ENCODE measurements at regions of chr12 and their contacts with region 1.

Region 1: DNA sequence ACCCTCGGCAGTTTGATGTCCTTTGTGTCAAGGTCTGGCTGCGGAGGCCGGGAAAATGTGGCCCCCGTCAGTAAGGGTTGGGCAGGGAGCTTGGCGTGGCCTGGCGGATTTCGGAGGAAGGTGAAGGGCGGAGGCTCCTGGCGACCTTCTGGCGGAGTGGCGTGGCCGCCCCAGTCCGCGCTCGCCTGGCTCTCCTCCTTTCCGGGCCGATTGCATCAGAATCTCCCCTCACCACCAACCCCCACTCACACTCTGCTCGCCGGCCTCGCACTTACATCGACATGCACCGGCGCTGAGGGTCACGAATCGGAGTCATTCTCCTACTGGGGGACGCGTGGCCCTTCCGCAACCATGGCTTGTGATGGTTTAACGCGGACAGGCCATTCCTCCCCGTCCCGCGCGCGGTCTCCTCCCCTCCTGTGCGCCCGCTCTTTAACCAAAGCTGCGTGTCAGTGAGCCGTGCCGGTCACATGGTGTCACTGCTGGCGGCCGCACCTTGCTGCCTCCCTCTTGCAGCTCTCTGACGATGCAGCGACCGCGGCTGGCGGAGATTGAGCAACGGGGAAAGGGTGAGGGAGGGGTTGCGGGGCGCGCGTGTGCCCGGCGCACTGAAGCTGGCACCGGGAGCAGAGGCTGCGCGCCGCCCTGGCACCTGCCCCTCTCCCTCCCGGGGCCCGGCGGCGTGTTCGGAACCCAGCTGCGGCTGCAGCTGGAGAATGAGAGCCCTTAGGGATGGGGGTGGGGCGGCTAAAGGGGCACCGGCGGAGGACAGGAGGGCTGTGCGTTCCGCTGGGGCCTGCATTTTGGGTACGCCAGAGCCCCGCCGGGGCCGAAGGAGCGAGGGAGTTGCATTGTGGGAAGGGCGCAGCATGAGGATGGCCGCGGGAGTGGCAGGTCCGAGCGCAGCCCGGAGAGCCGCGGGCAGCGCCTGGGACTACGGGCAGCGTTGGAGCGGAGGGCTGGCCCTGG is at the start of gene SLC38A1:
- DNase-seq: peak in 1 of 2 experiments; percentile 83
- H3K4me3 ChIP-seq: peak within 1 kb of the TSS; percentile 91 to 98 (median 96)
- H3K27ac ChIP-seq: peak within 1 kb of the TSS; percentile 97
- H3K4me1 ChIP-seq: peaks cover 3 to 18% (median 10%) of the 10 kb centered on the region in 4 experiments; a peak in 6 of 7 replicates
- H3K27me3 ChIP-seq: no peaks in the 10 kb centered on the region
- CTCF ChIP-seq: no peak
- EP300 ChIP-seq: no peak
- POLR2A ChIP-seq: peak; percentile 49 to 63; a peak in 2 of 3 replicates
- RAD21 ChIP-seq: peak in 1 of 2 experiments; percentile 18; a peak in 1 of 4 replicates
- total RNA-seq, gene SLC38A1: 242 and 253 TPM in 2 replicates

Region 2: DNA sequence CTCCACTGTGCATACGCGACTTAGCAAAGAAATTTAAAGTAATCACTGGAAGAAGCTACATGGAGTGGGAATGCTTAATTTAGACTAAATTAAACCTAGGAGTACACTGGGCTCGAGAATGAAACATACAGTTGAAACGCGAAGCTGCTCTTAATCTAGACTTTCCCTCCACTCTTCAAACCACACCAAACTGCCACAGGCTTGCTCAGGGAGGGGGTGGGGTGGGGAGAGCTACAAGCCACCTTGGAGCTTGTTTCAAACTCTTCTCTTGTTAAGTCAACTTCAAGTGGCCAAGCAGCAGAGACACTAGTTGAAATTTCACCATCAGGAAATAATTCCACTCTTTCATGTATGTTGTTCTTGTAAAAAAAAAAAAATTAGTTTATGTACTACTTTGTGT is 70.0 kb before region 1 on chr12:
- CTCF ChIA-PET with region 1: no interaction called
- POLR2A ChIA-PET with region 1: interaction called, 16 read pairs
- DNase-seq: no peak
- H3K4me3 ChIP-seq: no peak overlapping the region
- H3K27ac ChIP-seq: no peak overlapping the region
- H3K4me1 ChIP-seq: no peaks in the 10 kb centered on the region
- H3K27me3 ChIP-seq: no peaks in the 10 kb centered on the region
- CTCF ChIP-seq: no peak
- EP300 ChIP-seq: no peak
- POLR2A ChIP-seq: no peak
- RAD21 ChIP-seq: no peak

Region 3: DNA sequence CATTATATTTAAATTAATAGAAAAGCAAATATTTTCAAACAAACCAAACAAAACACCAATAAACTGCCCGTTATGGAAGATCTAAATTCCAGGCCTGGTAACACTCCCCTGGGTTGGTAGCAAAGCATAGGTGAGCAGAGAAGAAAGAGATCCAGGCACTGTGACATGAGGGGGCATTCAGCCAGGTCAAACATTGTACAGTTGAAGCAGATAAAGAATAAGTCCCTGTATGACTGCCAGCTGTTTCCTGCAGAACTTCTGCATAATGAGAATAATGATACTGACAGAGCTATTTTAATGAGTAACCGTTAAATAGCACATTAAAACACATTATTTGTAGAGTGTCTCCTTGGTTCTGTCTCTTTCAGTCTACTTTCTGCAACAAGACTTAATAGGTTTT is 35.5 kb before region 1 on chr12:
- CTCF ChIA-PET with region 1: interaction called, 3 read pairs
- POLR2A ChIA-PET with region 1: interaction called, 17 read pairs
- DNase-seq: no peak
- H3K4me3 ChIP-seq: no peak overlapping the region
- H3K27ac ChIP-seq: no peak overlapping the region
- H3K4me1 ChIP-seq: no peaks in the 10 kb centered on the region
- H3K27me3 ChIP-seq: no peaks in the 10 kb centered on the region
- CTCF ChIP-seq: no peak
- EP300 ChIP-seq: no peak
- POLR2A ChIP-seq: no peak
- RAD21 ChIP-seq: no peak

Region 4: GRCh38 chr12:46303039-46303666 is 34.3 kb after region 1 on chr12:
- CTCF ChIA-PET with region 1: interaction called, 6 read pairs
- POLR2A ChIA-PET with region 1: interaction called, 45 read pairs
- DNase-seq: no peak
- H3K4me3 ChIP-seq: no peak overlapping the region
- H3K27ac ChIP-seq: no peak overlapping the region
- H3K4me1 ChIP-seq: peaks cover 0 to 18% (median 5%) of the 10 kb centered on the region in 4 experiments; a peak in 2 of 7 replicates
- H3K27me3 ChIP-seq: no peaks in the 10 kb centered on the region
- CTCF ChIP-seq: peak; percentile 13 to 76 (median 41)
- EP300 ChIP-seq: no peak
- POLR2A ChIP-seq: no peak
- RAD21 ChIP-seq: peak; percentile 41 to 61

Region 5: DNA sequence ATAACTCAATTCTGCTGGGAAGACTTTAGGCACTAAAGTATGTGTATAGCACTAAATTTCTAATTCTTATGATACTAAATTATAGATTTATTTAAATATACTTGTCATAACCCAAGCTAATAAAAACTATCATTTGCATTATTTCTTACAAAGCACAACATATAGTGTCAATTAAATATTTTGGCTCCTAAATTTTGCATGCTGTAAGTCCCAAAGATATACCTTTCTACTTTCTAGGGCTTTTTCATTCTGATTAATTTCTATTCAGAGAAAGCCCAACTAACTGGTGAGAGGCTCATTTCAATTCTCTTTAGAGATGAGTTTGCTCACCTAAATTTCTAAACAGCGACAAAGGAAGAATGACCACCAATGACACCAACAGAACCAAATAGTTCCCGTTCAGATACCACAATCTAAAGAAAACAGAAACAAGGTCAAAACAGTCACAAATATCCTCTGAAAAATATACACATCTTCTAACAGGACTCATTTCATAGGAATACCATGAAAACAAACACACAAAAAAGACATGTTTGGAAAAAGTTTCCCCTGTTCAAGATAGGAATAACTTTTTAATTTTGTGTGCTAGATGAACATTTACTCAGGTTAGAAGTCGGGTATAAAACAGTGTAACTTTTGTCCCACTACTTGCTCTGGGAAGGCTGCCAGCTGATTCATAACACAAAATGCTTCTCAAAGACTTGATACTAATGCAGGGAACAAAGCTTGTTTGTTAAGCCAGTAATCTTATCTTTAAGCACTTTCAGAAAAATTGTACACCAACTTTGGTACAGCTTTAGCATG is 96.1 kb after region 1 on chr12:
- CTCF ChIA-PET with region 1: no interaction called
- POLR2A ChIA-PET with region 1: interaction called, 48 read pairs
- DNase-seq: no peak
- H3K4me3 ChIP-seq: no peak overlapping the region
- H3K27ac ChIP-seq: no peak overlapping the region
- H3K4me1 ChIP-seq: peaks cover 0 to 7% (median 1%) of the 10 kb centered on the region in 4 experiments; a peak in 2 of 7 replicates
- H3K27me3 ChIP-seq: no peaks in the 10 kb centered on the region
- CTCF ChIP-seq: no peak
- EP300 ChIP-seq: no peak
- POLR2A ChIP-seq: peak; percentile 16 to 35; a peak in 1 of 3 replicates
- RAD21 ChIP-seq: no peak

Measured in H1 (cell line).